Mammary epithelial cell (primary cell): ENCODE measurements at regions of chr9 and their contacts with region 1.

Region 1: DNA sequence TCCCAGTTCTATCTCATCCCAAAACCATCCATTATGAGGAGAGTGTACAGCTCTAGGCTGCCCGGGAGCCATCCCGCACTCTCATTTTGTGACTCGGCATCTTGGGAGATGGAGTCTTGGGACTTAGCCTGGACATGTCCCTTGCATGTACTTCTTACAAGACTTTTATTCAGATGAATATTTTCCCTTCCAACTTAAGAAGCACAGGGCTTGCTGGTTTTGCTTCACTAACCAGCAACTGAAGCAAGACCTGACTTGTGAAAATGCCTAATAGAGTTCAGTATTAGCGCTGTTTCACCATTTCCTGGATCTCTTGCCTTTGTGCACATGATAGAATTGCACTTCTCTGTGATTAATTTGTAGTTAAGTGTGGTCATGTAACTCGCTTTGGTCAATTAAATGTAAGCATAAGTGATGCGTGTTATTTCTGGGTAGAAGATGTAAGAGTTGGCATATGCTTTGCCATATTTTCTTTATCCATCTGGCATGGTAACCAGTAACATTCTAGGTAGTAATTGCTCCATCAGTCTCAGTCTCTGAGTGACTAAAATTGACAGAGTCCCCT is 55.8 kb downstream of the PDCD1LG2 start:
- DNase-seq: peak; percentile 91
- H3K4me3 ChIP-seq: no peak overlapping the region
- H3K27ac ChIP-seq: peak overlapping the region; percentile 87
- H3K4me1 ChIP-seq: peaks cover 44% of the 10 kb centered on the region
- H3K27me3 ChIP-seq: no peaks in the 10 kb centered on the region
- CTCF ChIP-seq: no peak

Region 2: DNA sequence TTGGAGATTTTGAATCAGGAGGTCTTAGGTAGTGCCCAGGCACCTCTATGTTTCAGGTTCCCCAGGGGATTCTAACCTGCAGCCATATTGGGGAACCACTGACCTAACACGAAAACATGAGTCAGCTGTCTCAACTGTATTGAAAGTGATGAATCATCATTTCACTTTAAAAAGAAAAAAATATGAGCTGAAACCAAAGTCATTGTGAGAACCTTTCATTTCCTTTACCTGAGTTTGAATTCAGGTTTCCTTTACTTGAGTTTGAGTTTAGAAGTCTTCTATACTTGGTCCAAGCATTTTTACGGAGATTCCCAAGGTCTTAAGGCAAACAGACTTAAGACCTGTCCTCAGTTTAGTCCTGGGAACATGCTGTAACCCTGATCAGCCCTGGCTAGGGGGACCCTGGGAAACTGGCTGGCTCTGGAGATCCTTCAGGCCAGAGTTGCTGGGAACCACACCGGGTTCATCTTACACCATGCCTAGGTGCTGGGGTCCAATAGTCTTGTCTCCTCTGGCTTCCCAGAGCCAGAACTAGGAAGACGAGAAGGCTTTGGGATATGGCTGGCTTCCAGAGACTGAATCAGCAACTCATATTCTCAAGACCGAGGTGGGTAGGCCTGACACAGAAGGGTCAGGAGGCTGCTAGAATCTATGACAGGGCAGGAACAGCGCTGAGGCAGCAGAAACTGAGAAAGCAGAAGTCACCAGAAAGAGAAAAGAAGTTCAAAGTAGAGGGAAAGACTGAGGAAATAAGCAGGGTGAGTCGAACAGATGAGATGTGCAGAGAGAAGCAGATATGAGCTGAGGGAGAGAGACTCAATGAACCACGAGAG is 72.2 kb before region 1 on chr9:
- CTCF ChIA-PET with region 1: no interaction called
- dilution Hi-C with region 1: no loop called
- in situ Hi-C with region 1: no loop called
- intact Hi-C with region 1: loop called (anchors 1 kb)
- DNase-seq: peak; percentile 89
- H3K4me3 ChIP-seq: no peak overlapping the region
- H3K27ac ChIP-seq: peak overlapping the region; percentile 96
- H3K4me1 ChIP-seq: peaks cover 25% of the 10 kb centered on the region
- H3K27me3 ChIP-seq: no peaks in the 10 kb centered on the region
- CTCF ChIP-seq: no peak

Region 3: GRCh38 chr9:5510360-5510931 is 55.7 kb before region 1 on chr9 and contains the start of gene PDCD1LG2:
- CTCF ChIA-PET with region 1: no interaction called
- dilution Hi-C with region 1: no loop called
- in situ Hi-C with region 1: no loop called
- intact Hi-C with region 1: loop called (anchors 1 kb)
- DNase-seq: peak; percentile 75
- H3K4me3 ChIP-seq: peak within 1 kb of the TSS; percentile 27 to 51 (median 47)
- H3K27ac ChIP-seq: peak within 1 kb of the TSS; percentile 89
- H3K4me1 ChIP-seq: peaks cover 54% of the 10 kb centered on the region
- H3K27me3 ChIP-seq: no peaks in the 10 kb centered on the region
- CTCF ChIP-seq: no peak
- total RNA-seq, gene PDCD1LG2: 12.1 to 14.5 TPM

Region 4: GRCh38 chr9:5582835-5583195 is 16.7 kb after region 1 on chr9:
- CTCF ChIA-PET with region 1: no interaction called
- dilution Hi-C with region 1: no loop called
- in situ Hi-C with region 1: no loop called
- intact Hi-C with region 1: loop called (anchors 2 kb)
- DNase-seq: peak; percentile 53
- H3K4me3 ChIP-seq: no peak overlapping the region
- H3K27ac ChIP-seq: no peak overlapping the region
- H3K4me1 ChIP-seq: peaks cover 28% of the 10 kb centered on the region
- H3K27me3 ChIP-seq: no peaks in the 10 kb centered on the region
- CTCF ChIP-seq: no peak